ENCODE measurements at regions of chr20 and their contacts with region 1.

Region 1: DNA sequence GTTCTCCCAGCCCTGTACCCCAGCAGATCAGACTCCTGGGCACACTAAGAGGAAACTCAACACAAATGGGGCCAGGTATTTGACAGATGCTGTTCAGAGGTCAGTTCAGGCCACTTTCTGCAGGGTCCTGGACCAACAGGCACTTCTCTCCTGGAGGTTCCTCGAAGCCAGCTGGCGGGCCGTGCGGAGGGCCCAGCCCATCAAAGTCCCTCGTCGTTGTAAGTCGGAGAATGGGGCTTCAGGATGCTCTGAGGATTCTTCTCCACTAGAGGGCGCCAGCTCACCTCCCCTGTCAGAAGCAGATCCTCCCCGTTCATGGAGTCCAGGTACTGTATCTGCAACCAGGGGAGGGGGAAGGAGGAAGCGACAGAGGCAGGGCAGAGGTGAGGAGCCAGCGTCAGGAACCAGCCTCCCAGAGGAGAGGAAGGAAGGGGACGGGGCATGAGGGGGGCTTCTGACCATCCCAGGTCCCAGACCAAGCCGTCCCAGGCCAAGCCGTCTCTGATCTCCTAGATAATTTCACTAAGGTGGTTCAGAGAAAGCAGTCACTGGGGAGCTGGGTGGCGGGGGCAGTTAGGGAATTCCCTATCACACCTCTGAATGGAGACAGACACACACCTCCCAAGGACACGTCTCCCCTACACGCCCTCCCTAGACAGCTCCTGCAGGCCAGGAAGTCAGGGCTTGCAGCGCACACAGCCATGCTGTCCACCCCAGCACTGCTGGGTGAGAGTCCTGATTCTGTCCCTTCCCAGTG is 11.7 kb upstream of the FAM83C start:
- DNase-seq: peak; percentile 77 to 83
- H3K4me3 ChIP-seq: no peak overlapping the region
- H3K27ac ChIP-seq: no peak overlapping the region
- H3K4me1 ChIP-seq: peaks cover 0 to 3% of the 10 kb centered on the region in 2 donors
- H3K27me3 ChIP-seq: no peaks in the 10 kb centered on the region
- CTCF ChIP-seq: peak; percentile 77 to 89 (median 88)
- POLR2A ChIP-seq: no peak

Region 2: DNA sequence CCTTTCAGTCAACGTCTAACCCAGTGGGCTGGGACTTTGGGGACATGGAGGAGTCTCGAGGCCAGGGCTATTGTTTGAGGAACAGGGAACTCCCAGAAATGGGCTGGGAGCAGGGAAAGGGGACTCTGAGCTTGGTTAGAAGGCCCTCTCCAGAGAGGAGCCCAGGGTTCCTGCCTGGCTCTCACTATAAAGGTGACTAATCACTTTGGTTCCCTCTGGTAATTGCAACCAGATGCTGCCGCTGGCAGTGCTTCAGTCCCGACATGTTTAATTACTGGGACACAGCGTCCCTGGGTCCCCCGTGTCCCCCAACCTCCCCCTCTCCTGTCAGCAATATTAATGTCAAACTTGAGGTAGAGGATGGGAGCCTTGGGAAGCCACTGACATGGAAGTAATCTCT is 139.1 kb after region 1 on chr20:
- intact Hi-C with region 1: loop called (anchors 5 kb)
- DNase-seq: no peak
- H3K4me3 ChIP-seq: no peak overlapping the region
- H3K27ac ChIP-seq: no peak overlapping the region
- H3K4me1 ChIP-seq: no peaks in the 10 kb centered on the region
- H3K27me3 ChIP-seq: no peaks in the 10 kb centered on the region
- CTCF ChIP-seq: no peak
- POLR2A ChIP-seq: no peak

Measured in uterus (tissue), 4 donors.